AG04450 (cell line): ENCODE measurements at regions of chr1 and their contacts with region 1.

Region 1: GRCh38 chr1:54488779-54489626 is 59.0 kb upstream of the ACOT11 start:
- DNase-seq: peak; percentile 10
- H3K4me3 ChIP-seq: peak overlapping the region; percentile 56
- H3K27ac ChIP-seq: peak overlapping the region; percentile 70
- H3K27me3 ChIP-seq: no peaks in the 10 kb centered on the region
- CTCF ChIP-seq: peak; percentile 85

Region 2: DNA sequence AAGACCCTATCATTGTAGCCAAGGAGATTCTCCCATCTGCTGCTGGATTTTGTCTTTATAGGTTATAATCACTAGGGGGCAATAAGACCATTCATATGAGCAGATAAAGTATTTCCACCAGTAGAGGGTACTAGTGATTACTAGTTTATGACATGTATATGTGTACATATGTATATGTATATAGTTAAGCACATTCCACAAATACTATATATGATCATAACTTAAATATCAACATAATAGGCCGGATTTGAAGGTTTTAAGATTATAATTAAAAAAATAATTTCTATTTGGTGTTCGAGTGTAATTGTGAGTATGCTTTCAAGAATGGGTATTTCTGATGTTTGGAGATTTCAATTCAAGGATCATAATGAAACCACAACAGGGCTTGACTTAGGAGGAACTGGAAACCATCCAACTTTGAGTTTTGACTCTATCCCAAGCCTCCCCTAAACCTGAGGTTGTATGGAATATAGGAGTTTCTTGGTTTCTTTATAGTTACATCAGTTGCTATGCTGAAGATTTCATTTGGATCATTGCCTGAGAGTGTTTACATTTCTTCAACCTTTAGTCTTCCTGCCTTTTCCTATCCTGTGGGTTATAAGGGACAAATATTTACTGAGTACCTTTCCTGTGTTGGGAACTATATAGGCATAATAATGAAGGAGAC is 418.7 kb before region 1 on chr1:
- CTCF ChIA-PET with region 1: interaction called, 22 read pairs
- POLR2A ChIA-PET with region 1: no interaction called
- DNase-seq: no peak
- H3K4me3 ChIP-seq: no peak overlapping the region
- H3K27ac ChIP-seq: no peak overlapping the region
- H3K27me3 ChIP-seq: no peaks in the 10 kb centered on the region
- CTCF ChIP-seq: peak; percentile 88

Region 3: GRCh38 chr1:54180701-54181360 is 308.2 kb before region 1 on chr1:
- CTCF ChIA-PET with region 1: interaction called, 11 read pairs
- POLR2A ChIA-PET with region 1: no interaction called
- DNase-seq: no peak
- H3K4me3 ChIP-seq: no peak overlapping the region
- H3K27ac ChIP-seq: no peak overlapping the region
- H3K27me3 ChIP-seq: no peaks in the 10 kb centered on the region
- CTCF ChIP-seq: no peak

Region 4: GRCh38 chr1:54273092-54273794 is 215.8 kb before region 1 on chr1:
- CTCF ChIA-PET with region 1: interaction called, 16 read pairs
- POLR2A ChIA-PET with region 1: interaction called, 5 read pairs
- DNase-seq: peak; percentile 83
- H3K4me3 ChIP-seq: peak overlapping the region; percentile 27
- H3K27ac ChIP-seq: peak overlapping the region; percentile 83
- H3K27me3 ChIP-seq: no peaks in the 10 kb centered on the region
- CTCF ChIP-seq: peak; percentile 84

Region 5: DNA sequence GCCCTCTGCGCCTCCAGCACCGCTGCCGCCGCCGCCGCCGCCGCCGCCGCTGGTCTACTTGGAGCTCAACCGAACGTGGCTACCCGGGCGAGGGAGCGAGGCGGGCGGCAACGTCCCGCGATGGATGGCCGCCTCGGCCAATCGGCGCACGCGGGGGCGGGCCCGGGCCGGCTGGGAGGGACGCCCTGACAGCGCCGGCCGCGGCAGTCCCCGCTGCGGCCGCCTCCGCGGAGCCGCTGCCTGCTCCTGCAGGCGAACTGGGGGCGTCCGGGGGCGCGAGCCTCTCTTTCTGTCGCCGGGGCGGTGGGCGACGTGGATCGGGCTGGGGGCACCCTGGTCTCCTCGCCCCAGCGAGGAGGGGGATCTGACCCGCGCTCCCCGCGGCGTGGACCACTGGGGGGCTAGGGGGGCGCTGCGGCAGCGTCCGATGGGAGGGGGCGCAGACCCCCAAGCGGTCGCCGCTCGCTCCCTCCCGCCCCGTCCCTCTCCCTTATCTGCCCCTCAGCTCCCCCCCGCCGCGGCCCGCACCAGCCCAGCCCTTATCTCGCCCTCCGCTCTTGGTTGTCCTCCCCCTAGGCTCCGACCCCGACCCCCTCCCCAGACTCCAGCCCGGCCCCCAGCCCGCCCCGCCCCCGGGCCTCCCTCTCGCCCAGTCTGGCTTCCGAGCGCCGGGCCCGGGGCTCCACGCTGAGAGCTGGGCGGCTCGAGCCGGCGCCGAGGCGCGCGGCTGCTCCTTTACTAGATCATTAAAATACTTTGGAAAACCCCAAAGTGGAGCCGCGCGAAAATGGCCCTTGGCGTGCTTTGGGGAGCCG is 82.5 kb before region 1 on chr1 and contains the start of gene SSBP3:
- CTCF ChIA-PET with region 1: interaction called, 38 read pairs
- POLR2A ChIA-PET with region 1: interaction called, 19 read pairs
- DNase-seq: peak; percentile 61
- H3K4me3 ChIP-seq: peak within 1 kb of the TSS; percentile 79
- H3K27ac ChIP-seq: peak within 1 kb of the TSS; percentile 57
- H3K27me3 ChIP-seq: no peaks in the 10 kb centered on the region
- CTCF ChIP-seq: no peak
- polyA plus RNA-seq, gene SSBP3: 33.8 and 34.3 TPM in 2 replicates

Region 6: GRCh38 chr1:54456361-54456760 is 32.6 kb before region 1 on chr1:
- CTCF ChIA-PET with region 1: no interaction called
- POLR2A ChIA-PET with region 1: no interaction called
- DNase-seq: no peak
- H3K4me3 ChIP-seq: no peak overlapping the region
- H3K27ac ChIP-seq: no peak overlapping the region
- H3K27me3 ChIP-seq: peaks cover 2% of the 10 kb centered on the region
- CTCF ChIP-seq: no peak

Region 7: GRCh38 chr1:54528613-54529012 is 39.6 kb after region 1 on chr1:
- CTCF ChIA-PET with region 1: no interaction called
- POLR2A ChIA-PET with region 1: no interaction called
- DNase-seq: no peak
- H3K4me3 ChIP-seq: no peak overlapping the region
- H3K27ac ChIP-seq: no peak overlapping the region
- H3K27me3 ChIP-seq: peaks cover 21% of the 10 kb centered on the region
- CTCF ChIP-seq: no peak